ENCODE measurements at regions of chr14 and their contacts with region 1.

Region 1: GRCh38 chr14:32076278-32077080 is 625 bp upstream of the ARHGAP5 start:
- DNase-seq: peak; percentile 47 to 90 (median 75)
- ATAC-seq: peak; percentile 61
- H3K4me3 ChIP-seq: peak overlapping the region; percentile 77 to 96
- H3K4me3 Mint-ChIP-seq: peak overlapping the region; percentile 100
- H3K27ac ChIP-seq: peak overlapping the region; percentile 69 to 74
- H3K27ac Mint-ChIP-seq: peak overlapping the region; percentile 95
- H3K4me1 ChIP-seq: peaks cover 13% of the 10 kb centered on the region
- H3K4me1 Mint-ChIP-seq: peaks cover 36% of the 10 kb centered on the region
- H3K27me3 ChIP-seq: no peaks in the 10 kb centered on the region
- H3K27me3 Mint-ChIP-seq: no peaks in the 10 kb centered on the region
- CTCF ChIP-seq: no peak

Region 2: GRCh38 chr14:30558675-30559555 is 1517.6 kb before region 1 on chr14 and contains the start of gene G2E3:
- CTCF ChIA-PET with region 1: no interaction called
- POLR2A ChIA-PET with region 1: no interaction called
- intact Hi-C with region 1: loop called in 1 of 2 experiments (anchors 2 kb)
- DNase-seq: peak; percentile 73 to 92 (median 84)
- ATAC-seq: peak; percentile 99
- H3K4me3 ChIP-seq: peak within 1 kb of the TSS; percentile 91 to 96
- H3K4me3 Mint-ChIP-seq: peak within 1 kb of the TSS; percentile 99
- H3K27ac ChIP-seq: peak within 1 kb of the TSS; percentile 83 to 86
- H3K27ac Mint-ChIP-seq: peak within 1 kb of the TSS; percentile 98
- H3K4me1 ChIP-seq: peaks cover 24% of the 10 kb centered on the region
- H3K4me1 Mint-ChIP-seq: peaks cover 37% of the 10 kb centered on the region
- H3K27me3 ChIP-seq: no peaks in the 10 kb centered on the region
- H3K27me3 Mint-ChIP-seq: no peaks in the 10 kb centered on the region
- CTCF ChIP-seq: no peak
- total RNA-seq, gene G2E3: 25.2 to 34.7 TPM

Region 3: GRCh38 chr14:31207755-31208545 is 868.5 kb before region 1 on chr14 and contains the start of gene HECTD1:
- CTCF ChIA-PET with region 1: no interaction called
- POLR2A ChIA-PET with region 1: interaction called, 7 read pairs
- intact Hi-C with region 1: loop called (anchors 2 to 5 kb)
- DNase-seq: peak; percentile 78 to 97 (median 86)
- ATAC-seq: peak; percentile 67
- H3K4me3 ChIP-seq: peak within 1 kb of the TSS; percentile 74 to 77
- H3K4me3 Mint-ChIP-seq: peak within 1 kb of the TSS; percentile 96
- H3K27ac ChIP-seq: peak within 1 kb of the TSS; percentile 94 to 95
- H3K27ac Mint-ChIP-seq: peak within 1 kb of the TSS; percentile 100
- H3K4me1 ChIP-seq: peaks cover 36% of the 10 kb centered on the region
- H3K4me1 Mint-ChIP-seq: peaks cover 57% of the 10 kb centered on the region
- H3K27me3 ChIP-seq: no peaks in the 10 kb centered on the region
- H3K27me3 Mint-ChIP-seq: no peaks in the 10 kb centered on the region
- CTCF ChIP-seq: peak; percentile 81
- total RNA-seq, gene HECTD1: 148 to 152 TPM

Region 4: GRCh38 chr14:31561155-31561846 is 515.2 kb before region 1 on chr14 and contains the start of gene NUBPL:
- CTCF ChIA-PET with region 1: no interaction called
- POLR2A ChIA-PET with region 1: no interaction called
- intact Hi-C with region 1: loop called (anchors 1 to 2 kb)
- DNase-seq: peak; percentile 95 to 99 (median 98)
- ATAC-seq: peak; percentile 95
- H3K4me3 ChIP-seq: peak within 1 kb of the TSS; percentile 75 to 86
- H3K4me3 Mint-ChIP-seq: peak within 1 kb of the TSS; percentile 96
- H3K27ac ChIP-seq: peak within 1 kb of the TSS; percentile 82 to 86
- H3K27ac Mint-ChIP-seq: peak within 1 kb of the TSS; percentile 98
- H3K4me1 ChIP-seq: peaks cover 18% of the 10 kb centered on the region
- H3K4me1 Mint-ChIP-seq: peaks cover 35% of the 10 kb centered on the region
- H3K27me3 ChIP-seq: no peaks in the 10 kb centered on the region
- H3K27me3 Mint-ChIP-seq: peaks cover 4% of the 10 kb centered on the region
- CTCF ChIP-seq: no peak
- total RNA-seq, gene NUBPL: 4.7 to 7.5 TPM

Region 5: GRCh38 chr14:31897581-31898186 is 178.8 kb before region 1 on chr14:
- CTCF ChIA-PET with region 1: no interaction called
- POLR2A ChIA-PET with region 1: no interaction called
- intact Hi-C with region 1: no loop called
- DNase-seq: no peak
- ATAC-seq: no peak
- H3K4me3 ChIP-seq: no peak overlapping the region
- H3K4me3 Mint-ChIP-seq: no peak overlapping the region
- H3K27ac ChIP-seq: no peak overlapping the region
- H3K27ac Mint-ChIP-seq: no peak overlapping the region
- H3K4me1 ChIP-seq: no peaks in the 10 kb centered on the region
- H3K4me1 Mint-ChIP-seq: no peaks in the 10 kb centered on the region
- H3K27me3 ChIP-seq: no peaks in the 10 kb centered on the region
- H3K27me3 Mint-ChIP-seq: peaks cover 11% of the 10 kb centered on the region
- CTCF ChIP-seq: no peak

Region 6: GRCh38 chr14:32050878-32051277 is 25.6 kb before region 1 on chr14:
- CTCF ChIA-PET with region 1: no interaction called
- POLR2A ChIA-PET with region 1: no interaction called
- intact Hi-C with region 1: no loop called
- DNase-seq: no peak
- ATAC-seq: no peak
- H3K4me3 ChIP-seq: no peak overlapping the region
- H3K4me3 Mint-ChIP-seq: no peak overlapping the region
- H3K27ac ChIP-seq: no peak overlapping the region
- H3K27ac Mint-ChIP-seq: no peak overlapping the region
- H3K4me1 ChIP-seq: no peaks in the 10 kb centered on the region
- H3K4me1 Mint-ChIP-seq: no peaks in the 10 kb centered on the region
- H3K27me3 ChIP-seq: no peaks in the 10 kb centered on the region
- H3K27me3 Mint-ChIP-seq: peaks cover 2% of the 10 kb centered on the region
- CTCF ChIP-seq: no peak

Region 7: DNA sequence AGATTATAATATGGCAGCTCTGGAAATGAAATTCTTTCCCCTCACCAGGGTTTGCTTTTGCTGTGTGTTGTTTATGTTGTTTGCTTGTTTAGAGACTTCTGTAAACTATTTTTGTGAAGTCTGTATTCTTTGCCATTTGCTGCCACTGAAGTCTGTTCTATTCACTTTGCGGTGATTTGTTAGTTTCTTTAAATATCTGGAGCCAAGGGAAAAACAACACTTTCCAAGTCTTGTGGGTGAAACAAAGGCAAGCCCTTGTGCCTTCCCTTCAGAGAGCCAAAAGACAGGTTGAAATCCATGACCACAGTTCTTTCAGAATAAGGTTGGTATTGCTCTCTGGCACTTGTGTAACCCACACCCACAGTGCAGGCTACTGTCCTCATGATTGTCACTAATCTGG is 65.9 kb after region 1 on chr14:
- CTCF ChIA-PET with region 1: no interaction called
- POLR2A ChIA-PET with region 1: no interaction called
- intact Hi-C with region 1: loop called in 1 of 2 experiments (anchors 5 kb)
- DNase-seq: no peak
- ATAC-seq: no peak
- H3K4me3 ChIP-seq: no peak overlapping the region
- H3K4me3 Mint-ChIP-seq: no peak overlapping the region
- H3K27ac ChIP-seq: no peak overlapping the region
- H3K27ac Mint-ChIP-seq: no peak overlapping the region
- H3K4me1 ChIP-seq: no peaks in the 10 kb centered on the region
- H3K4me1 Mint-ChIP-seq: no peaks in the 10 kb centered on the region
- H3K27me3 ChIP-seq: no peaks in the 10 kb centered on the region
- H3K27me3 Mint-ChIP-seq: no peaks in the 10 kb centered on the region
- CTCF ChIP-seq: no peak

Region 8: DNA sequence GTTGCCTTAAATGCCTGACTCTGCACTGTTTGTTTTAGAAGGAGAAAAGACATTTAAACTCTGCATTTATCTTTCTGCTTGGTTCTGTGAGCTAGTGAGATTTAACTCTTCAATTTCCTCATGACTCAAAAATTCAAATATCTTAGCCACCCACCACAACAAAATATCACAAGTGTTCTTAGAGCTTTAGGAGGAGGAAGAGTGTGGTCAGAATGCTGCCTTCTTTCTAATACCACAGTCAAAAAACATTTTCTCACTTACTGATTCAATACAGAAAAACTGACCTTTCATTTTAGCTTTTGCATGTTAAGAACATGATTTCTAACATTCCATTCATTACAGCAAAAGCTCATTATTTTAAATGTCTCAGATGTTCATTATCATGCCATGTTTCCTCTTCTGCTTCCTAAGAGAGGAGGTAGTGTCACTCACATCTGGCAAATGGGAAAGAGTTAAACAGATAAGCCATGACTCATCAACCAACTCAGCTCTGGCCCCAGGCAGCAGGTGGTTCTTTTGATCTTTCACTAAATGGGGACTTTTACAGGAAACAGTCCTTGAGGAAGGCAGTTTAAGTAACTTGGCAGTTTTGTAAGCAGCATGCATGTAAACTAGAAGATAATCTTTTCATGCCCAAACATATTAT is 183.0 kb after region 1 on chr14:
- CTCF ChIA-PET with region 1: interaction called, 247 read pairs
- POLR2A ChIA-PET with region 1: no interaction called
- intact Hi-C with region 1: no loop called
- DNase-seq: no peak
- ATAC-seq: no peak
- H3K4me3 ChIP-seq: no peak overlapping the region
- H3K4me3 Mint-ChIP-seq: no peak overlapping the region
- H3K27ac ChIP-seq: no peak overlapping the region
- H3K27ac Mint-ChIP-seq: no peak overlapping the region
- H3K4me1 ChIP-seq: no peaks in the 10 kb centered on the region
- H3K4me1 Mint-ChIP-seq: peaks cover 6% of the 10 kb centered on the region
- H3K27me3 ChIP-seq: no peaks in the 10 kb centered on the region
- H3K27me3 Mint-ChIP-seq: no peaks in the 10 kb centered on the region
- CTCF ChIP-seq: no peak

Measured in CD8-positive, alpha-beta T cell (primary cell).